ENCODE measurements at regions of chr3 and their contacts with region 1.

Region 1: DNA sequence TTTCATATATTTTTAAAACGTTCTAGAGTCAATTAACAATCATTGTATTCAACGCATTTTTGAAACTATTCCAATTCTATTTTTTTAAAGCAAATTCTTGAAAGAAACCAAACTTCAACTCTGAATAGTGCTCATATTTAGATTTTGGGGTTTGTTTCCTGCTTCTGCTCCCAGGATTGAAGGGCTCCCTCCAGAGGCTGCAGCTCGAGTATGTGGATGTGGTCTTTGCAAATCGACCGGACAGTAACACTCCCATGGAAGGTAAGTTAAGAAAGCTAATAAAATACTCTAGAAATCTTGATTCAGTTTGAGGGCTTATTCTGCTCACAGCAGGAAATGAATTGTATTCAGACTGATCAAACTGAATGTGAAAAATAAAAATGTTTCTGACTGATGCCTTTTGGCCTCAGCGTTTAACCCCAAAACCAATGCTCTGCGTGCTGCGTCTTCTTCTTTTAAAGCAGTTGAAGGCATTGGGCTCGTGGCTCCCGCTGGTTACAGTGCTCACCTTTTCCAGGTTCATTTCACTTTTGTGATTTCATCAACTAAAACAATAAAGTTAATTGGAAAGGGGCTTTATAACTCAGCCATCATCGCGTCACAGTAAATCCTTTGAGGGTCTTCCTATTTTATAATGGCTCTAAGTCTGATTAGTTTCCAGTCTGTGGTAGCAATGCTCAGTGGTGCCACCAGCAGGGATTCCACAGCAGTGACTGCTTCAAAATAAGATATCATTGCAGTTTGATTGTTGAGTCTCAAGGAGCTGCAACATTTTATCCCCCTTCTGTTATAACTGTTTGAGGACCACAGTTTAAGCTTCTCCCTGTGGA is 80.1 kb downstream of the SSR3 start:
- DNase-seq: peak; percentile 53
- ATAC-seq: peak; percentile 88
- H3K4me3 Mint-ChIP-seq: peak overlapping the region; percentile 60
- H3K27ac Mint-ChIP-seq: no peak overlapping the region
- H3K4me1 Mint-ChIP-seq: peaks cover 9% of the 10 kb centered on the region
- H3K27me3 Mint-ChIP-seq: no peaks in the 10 kb centered on the region
- CTCF ChIP-seq: 0 out of 2 replicates have a peak, but pooled peaks have one; percentile 26

Region 2: DNA sequence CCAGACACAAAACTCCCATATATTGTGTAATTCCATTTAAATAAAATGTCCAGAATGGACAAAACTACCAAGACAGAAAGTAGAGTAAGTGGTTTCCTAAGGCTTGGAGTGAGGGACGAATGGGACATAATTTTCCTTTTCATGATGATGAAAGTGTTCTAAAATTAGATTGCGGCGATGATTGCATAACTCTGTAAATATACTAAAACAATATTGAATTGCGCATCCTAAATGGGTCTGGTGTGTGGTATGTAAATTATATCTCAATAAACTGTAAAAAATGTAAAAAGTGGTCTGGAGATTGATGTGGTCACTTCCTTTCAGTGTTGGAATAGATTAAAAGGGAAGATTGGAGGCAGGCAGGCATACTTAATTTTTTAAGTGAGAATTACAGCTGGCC is 460.3 kb before region 1 on chr3:
- CTCF ChIA-PET with region 1: interaction called, 10 read pairs
- POLR2A ChIA-PET with region 1: no interaction called
- DNase-seq: no peak
- ATAC-seq: no peak
- H3K4me3 Mint-ChIP-seq: no peak overlapping the region
- H3K27ac Mint-ChIP-seq: no peak overlapping the region
- H3K4me1 Mint-ChIP-seq: peaks cover 2% of the 10 kb centered on the region; the same call in 1 of the 2 replicates
- H3K27me3 Mint-ChIP-seq: no peaks in the 10 kb centered on the region
- CTCF ChIP-seq: no peak

Region 3: GRCh38 chr3:156174229-156174847 is 300.4 kb before region 1 on chr3:
- CTCF ChIA-PET with region 1: interaction called, 25 read pairs
- POLR2A ChIA-PET with region 1: no interaction called
- DNase-seq: no peak
- ATAC-seq: peak; percentile 71
- H3K4me3 Mint-ChIP-seq: no peak overlapping the region
- H3K27ac Mint-ChIP-seq: no peak overlapping the region
- H3K4me1 Mint-ChIP-seq: no peaks in the 10 kb centered on the region
- H3K27me3 Mint-ChIP-seq: no peaks in the 10 kb centered on the region
- CTCF ChIP-seq: no peak

Region 4: DNA sequence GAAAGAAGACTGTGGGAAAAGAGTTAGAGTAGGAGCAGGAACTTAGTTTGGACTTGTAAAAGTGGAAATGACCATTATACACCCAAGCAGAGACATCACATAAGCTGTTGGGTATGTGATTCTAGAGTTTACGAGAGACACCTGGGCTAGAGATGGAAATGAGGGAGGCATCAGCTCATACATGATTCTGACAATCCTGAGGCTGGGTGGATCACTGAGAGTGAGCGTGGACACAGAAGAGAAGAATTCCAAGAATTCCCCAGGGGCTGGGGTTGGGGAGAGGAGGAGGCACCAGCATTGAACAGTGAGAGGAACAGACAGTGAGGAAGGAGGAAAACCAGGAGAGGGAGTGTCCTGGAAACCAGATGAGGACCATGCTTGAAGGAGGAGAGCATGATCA is 240.9 kb before region 1 on chr3:
- CTCF ChIA-PET with region 1: no interaction called
- POLR2A ChIA-PET with region 1: no interaction called
- DNase-seq: no peak
- ATAC-seq: peak; percentile 81
- H3K4me3 Mint-ChIP-seq: no peak overlapping the region
- H3K27ac Mint-ChIP-seq: no peak overlapping the region
- H3K4me1 Mint-ChIP-seq: peaks cover 13% of the 10 kb centered on the region
- H3K27me3 Mint-ChIP-seq: no peaks in the 10 kb centered on the region
- CTCF ChIP-seq: no peak

Region 5: DNA sequence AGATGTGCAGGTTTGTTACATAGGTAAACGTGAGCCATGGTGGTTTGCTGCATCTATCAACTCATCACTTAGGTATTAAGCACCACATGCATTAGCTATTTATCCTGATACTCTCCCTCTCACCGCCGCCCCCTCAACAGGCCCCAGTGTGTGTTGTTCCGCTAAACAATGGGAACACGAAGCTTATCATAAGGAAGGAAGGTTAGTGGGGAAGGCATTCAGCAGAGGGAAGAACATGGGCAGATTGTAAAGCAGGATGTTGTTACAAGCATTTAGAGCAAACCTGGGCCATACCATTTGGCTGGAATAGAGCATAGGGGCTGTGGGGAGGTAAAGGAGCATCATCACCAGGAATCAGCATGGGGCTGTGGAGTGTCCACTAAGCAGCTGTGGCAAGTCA is 31.7 kb before region 1 on chr3:
- CTCF ChIA-PET with region 1: interaction called, 18 read pairs
- POLR2A ChIA-PET with region 1: no interaction called
- DNase-seq: no peak
- ATAC-seq: no peak
- H3K4me3 Mint-ChIP-seq: no peak overlapping the region
- H3K27ac Mint-ChIP-seq: no peak overlapping the region
- H3K4me1 Mint-ChIP-seq: peaks cover 3% of the 10 kb centered on the region; the same call in 1 of the 2 replicates
- H3K27me3 Mint-ChIP-seq: no peaks in the 10 kb centered on the region; the same call in 1 of the 2 replicates
- CTCF ChIP-seq: no peak

Region 6: GRCh38 chr3:156456771-156457224 is 18.0 kb before region 1 on chr3:
- CTCF ChIA-PET with region 1: interaction called, 57 read pairs
- POLR2A ChIA-PET with region 1: no interaction called
- DNase-seq: peak; percentile 27
- ATAC-seq: peak; percentile 80
- H3K4me3 Mint-ChIP-seq: peak overlapping the region; percentile 20; the same call in 1 of the 2 replicates
- H3K27ac Mint-ChIP-seq: peak overlapping the region; percentile 98
- H3K4me1 Mint-ChIP-seq: peaks cover 38% of the 10 kb centered on the region
- H3K27me3 Mint-ChIP-seq: no peaks in the 10 kb centered on the region
- CTCF ChIP-seq: no peak

Region 7: DNA sequence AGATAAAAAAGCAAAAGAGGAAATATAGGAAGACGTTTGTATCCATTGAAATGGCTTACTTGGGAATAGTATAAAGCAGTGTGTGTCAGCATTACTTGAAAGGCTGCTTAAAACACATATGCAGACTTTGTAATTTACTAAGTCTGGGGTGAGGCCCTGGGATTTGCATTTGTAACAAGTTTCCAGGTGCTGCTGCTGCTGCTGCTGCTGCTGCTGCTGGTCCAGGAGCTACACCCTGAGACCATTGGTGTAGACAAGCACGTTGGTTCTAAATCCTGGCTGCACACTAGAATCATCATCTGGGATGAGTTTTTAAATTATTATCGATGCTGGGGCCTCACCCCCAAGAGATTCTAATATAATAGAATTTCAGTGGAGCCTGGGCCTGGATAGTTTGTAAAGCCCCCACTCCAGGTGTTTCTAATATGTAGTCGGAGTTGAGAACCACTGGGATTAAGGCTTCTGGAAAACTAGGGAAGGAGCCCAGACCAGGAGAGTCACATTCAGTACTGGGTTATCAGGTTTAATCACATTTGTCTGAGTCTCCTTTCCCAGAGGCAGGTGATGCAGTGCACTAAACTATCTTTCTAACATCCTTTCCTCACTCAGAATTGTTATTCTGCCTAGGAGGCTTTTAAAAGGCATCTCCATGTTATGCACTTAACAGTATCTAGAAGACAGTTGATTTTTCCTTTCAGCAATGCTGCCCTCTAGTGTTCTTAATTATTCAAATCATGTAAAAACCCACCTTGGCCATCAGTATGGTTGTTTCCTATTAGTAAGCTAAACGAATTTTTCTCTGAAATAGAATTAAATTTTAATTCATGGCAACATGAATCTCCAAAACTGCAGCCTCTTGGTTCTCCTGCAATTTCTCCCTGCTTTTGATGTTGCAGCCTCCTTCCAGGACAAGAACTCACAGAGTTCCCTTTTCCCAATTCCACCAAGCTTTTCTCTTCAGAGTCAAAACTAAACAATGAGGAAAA is 34.7 kb after region 1 on chr3:
- CTCF ChIA-PET with region 1: interaction called, 19 read pairs
- POLR2A ChIA-PET with region 1: no interaction called
- DNase-seq: no peak
- ATAC-seq: peak; percentile 82
- H3K4me3 Mint-ChIP-seq: no peak overlapping the region
- H3K27ac Mint-ChIP-seq: no peak overlapping the region
- H3K4me1 Mint-ChIP-seq: peaks cover 21% of the 10 kb centered on the region
- H3K27me3 Mint-ChIP-seq: no peaks in the 10 kb centered on the region
- CTCF ChIP-seq: peak; percentile 17; the same call in 1 of the 2 replicates

Measured in WTC11 (cell line).